ENCODE measurements at regions of chr12 and their contacts with region 1.

Region 1: GRCh38 chr12:85575120-85576096 is 260.8 kb downstream of the RASSF9 start:
- DNase-seq: peak; percentile 75 to 85 (median 78)
- H3K4me3 ChIP-seq: no peak overlapping the region
- H3K27ac ChIP-seq: no peak overlapping the region
- H3K4me1 ChIP-seq: peaks cover 0 to 2% (median 0%) of the 10 kb centered on the region in 4 experiments
- H3K27me3 ChIP-seq: no peaks in the 10 kb centered on the region

Region 2: GRCh38 chr12:85089792-85090191 is 485.6 kb before region 1 on chr12:
- CTCF ChIA-PET with region 1: no interaction called
- POLR2A ChIA-PET with region 1: no interaction called
- DNase-seq: no peak
- H3K4me3 ChIP-seq: no peak overlapping the region
- H3K27ac ChIP-seq: no peak overlapping the region
- H3K4me1 ChIP-seq: no peaks in the 10 kb centered on the region
- H3K27me3 ChIP-seq: no peaks in the 10 kb centered on the region

Region 3: GRCh38 chr12:85374981-85375380 is 200.4 kb before region 1 on chr12:
- CTCF ChIA-PET with region 1: no interaction called
- POLR2A ChIA-PET with region 1: no interaction called
- DNase-seq: no peak
- H3K4me3 ChIP-seq: no peak overlapping the region
- H3K27ac ChIP-seq: no peak overlapping the region
- H3K4me1 ChIP-seq: no peaks in the 10 kb centered on the region
- H3K27me3 ChIP-seq: no peaks in the 10 kb centered on the region

Region 4: DNA sequence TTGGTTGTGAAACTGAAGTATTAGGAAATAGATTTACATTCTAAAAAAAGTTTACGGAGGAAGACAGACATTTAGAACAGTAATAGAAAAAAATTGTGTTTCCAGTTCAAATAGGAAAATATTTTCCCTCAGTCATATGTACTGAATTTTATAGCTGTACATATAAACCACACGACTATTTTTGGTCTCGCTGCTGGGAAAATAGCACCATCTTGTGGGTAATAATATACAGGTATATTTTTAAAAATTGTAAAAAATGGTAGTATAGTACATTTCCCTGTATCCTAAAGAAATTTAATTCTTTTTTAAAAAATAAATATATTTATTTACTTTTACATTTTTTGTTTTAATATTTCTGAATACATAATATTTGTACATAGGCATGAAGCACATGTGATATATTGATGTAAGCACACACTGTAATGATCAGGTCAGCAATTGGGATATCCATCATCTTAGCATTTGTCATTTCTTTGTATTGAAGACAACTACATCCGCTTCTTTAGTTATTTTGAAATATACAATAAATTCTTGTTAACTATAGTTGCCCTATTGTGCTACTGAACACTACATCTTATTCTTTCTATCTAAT is 126.8 kb before region 1 on chr12:
- CTCF ChIA-PET with region 1: no interaction called
- POLR2A ChIA-PET with region 1: no interaction called
- DNase-seq: peak; percentile 14 to 40 (median 37)
- H3K4me3 ChIP-seq: no peak overlapping the region
- H3K27ac ChIP-seq: no peak overlapping the region
- H3K4me1 ChIP-seq: no peaks in the 10 kb centered on the region
- H3K27me3 ChIP-seq: peaks cover 0 to 2% (median 0%) of the 10 kb centered on the region in 5 experiments

Region 5: GRCh38 chr12:85588221-85588620 is 12.8 kb after region 1 on chr12:
- CTCF ChIA-PET with region 1: interaction called, 12 read pairs
- POLR2A ChIA-PET with region 1: no interaction called
- DNase-seq: peak in 2 of 3 donors; percentile 25 to 44
- H3K4me3 ChIP-seq: no peak overlapping the region
- H3K27ac ChIP-seq: no peak overlapping the region
- H3K4me1 ChIP-seq: no peaks in the 10 kb centered on the region
- H3K27me3 ChIP-seq: no peaks in the 10 kb centered on the region